B cell (primary cell): ENCODE measurements at regions of chr3 and their contacts with region 1.

Region 1: DNA sequence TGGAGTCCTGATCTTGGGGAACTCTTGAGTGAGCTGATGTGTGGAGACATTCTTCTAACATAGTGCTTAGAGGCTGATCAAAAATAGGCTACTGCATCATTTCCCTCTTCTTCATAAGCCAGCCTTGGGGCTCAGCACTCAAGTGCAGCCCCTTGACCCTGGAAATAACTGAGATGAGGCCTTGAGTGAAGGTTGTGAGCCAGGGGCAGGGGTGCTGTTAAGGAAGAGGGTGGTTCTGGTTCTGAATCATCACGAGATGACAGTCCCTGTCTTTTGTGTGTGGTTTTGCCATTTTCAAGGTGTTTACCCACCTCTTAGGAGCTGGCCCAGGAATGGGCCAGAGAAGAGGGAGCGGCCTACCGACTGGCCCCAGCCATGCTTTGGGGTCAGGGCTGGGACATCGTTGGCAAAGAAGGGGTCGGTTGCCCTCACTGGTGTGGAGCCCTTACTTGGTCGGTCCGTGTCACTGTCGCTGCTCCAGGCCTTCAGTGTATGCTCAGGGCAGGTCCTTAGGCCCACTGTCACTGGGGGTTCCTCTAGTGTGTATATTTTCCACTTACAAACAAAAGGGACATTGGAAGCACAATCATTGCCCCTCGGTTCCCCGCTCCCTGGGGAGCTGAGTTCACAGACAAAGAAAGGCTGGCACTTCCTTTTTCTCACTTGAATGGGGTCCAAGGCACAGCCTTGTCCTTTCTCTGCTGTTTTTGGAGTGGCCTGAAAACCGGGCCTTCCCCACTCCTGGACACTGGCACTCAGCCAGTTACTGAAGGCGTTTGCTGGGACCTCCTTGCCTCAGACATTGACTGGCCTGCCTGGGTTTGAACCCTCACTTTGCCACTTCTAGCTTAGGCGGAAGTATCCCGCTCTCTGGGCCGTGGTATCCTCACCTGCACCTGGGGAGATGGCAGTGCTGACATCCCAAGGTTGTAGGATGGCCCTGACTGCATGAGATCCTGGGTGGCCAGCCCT is 46.6 kb downstream of the SLC6A6 start:
- DNase-seq: no peak
- ATAC-seq: no peak
- H3K4me3 ChIP-seq: no peak overlapping the region
- H3K4me3 Mint-ChIP-seq: no peak overlapping the region
- H3K27ac ChIP-seq: no peak overlapping the region
- H3K27ac Mint-ChIP-seq: no peak overlapping the region
- H3K4me1 ChIP-seq: no peaks in the 10 kb centered on the region
- H3K4me1 Mint-ChIP-seq: peaks cover 9% of the 10 kb centered on the region
- H3K27me3 ChIP-seq: no peaks in the 10 kb centered on the region
- H3K27me3 Mint-ChIP-seq: no peaks in the 10 kb centered on the region
- CTCF ChIP-seq: no peak

Region 2: GRCh38 chr3:14201881-14202682 is 247.0 kb before region 1 on chr3:
- CTCF ChIA-PET with region 1: no interaction called
- POLR2A ChIA-PET with region 1: no interaction called
- intact Hi-C with region 1: no loop called
- DNase-seq: no peak
- ATAC-seq: no peak
- H3K4me3 ChIP-seq: no peak overlapping the region
- H3K4me3 Mint-ChIP-seq: no peak overlapping the region
- H3K27ac ChIP-seq: no peak overlapping the region
- H3K27ac Mint-ChIP-seq: no peak overlapping the region
- H3K4me1 ChIP-seq: no peaks in the 10 kb centered on the region
- H3K4me1 Mint-ChIP-seq: peaks cover 2% of the 10 kb centered on the region
- H3K27me3 ChIP-seq: no peaks in the 10 kb centered on the region
- H3K27me3 Mint-ChIP-seq: no peaks in the 10 kb centered on the region
- CTCF ChIP-seq: no peak

Region 3: GRCh38 chr3:14431892-14432834 is 16.9 kb before region 1 on chr3:
- CTCF ChIA-PET with region 1: interaction called, 3 read pairs
- POLR2A ChIA-PET with region 1: interaction called, 10 read pairs
- intact Hi-C with region 1: no loop called
- DNase-seq: peak; percentile 94
- ATAC-seq: peak; percentile 78
- H3K4me3 ChIP-seq: peak overlapping the region in 4 of 5 experiments; percentile 5 to 59 (median 34)
- H3K4me3 Mint-ChIP-seq: peak overlapping the region; percentile 80
- H3K27ac ChIP-seq: peak overlapping the region; percentile 93 to 98
- H3K27ac Mint-ChIP-seq: peak overlapping the region; percentile 94
- H3K4me1 ChIP-seq: peaks cover 75 to 89% of the 10 kb centered on the region in 2 donors
- H3K4me1 Mint-ChIP-seq: peaks cover 88% of the 10 kb centered on the region
- H3K27me3 ChIP-seq: no peaks in the 10 kb centered on the region
- H3K27me3 Mint-ChIP-seq: no peaks in the 10 kb centered on the region
- CTCF ChIP-seq: no peak